ENCODE measurements at regions of chr11 and their contacts with region 1.

Region 1: DNA sequence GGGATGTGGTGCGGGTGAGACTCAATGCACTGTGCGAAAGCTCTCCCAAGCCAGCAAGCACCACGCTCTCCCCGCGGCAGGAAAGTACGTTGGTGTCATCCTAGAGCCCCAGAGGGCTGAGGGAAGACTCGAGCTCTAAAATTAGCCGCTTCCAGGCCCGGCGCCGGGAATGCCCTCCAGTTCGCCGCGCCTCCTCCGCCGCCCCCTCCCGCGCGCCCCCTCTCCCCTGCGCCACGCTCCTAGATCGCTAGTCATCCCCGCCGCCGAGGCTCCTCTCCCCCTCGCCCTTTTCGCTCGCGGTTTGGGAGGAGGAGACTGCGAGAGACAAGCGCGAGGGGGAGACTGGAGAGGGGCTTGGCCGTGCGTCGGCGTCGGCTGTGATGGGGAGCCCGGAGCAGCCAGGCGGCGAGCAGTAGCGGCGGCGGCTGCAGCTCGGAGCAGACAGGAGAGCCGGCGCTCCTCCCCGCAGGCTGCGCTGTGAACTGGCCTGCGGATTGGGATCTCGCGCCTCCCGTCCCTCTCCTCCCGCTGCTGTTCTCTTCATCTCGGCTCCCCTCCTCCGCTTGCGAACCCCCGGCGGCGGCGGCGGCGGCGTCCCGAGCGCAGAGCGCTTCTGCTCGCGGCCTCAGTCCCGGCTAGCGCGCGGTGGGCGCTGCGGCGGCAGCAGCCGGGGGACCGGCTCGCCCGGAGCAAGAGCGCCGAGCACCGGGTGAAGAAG is at the start of gene FAT3:
- DNase-seq: peak; percentile 82
- H3K4me3 ChIP-seq: peak within 1 kb of the TSS; percentile 54
- H3K27ac ChIP-seq: no peak within 1 kb of the TSS
- H3K4me1 ChIP-seq: peaks cover 16% of the 10 kb centered on the region
- H3K27me3 ChIP-seq: peaks cover 44% of the 10 kb centered on the region
- CTCF ChIP-seq: no peak
- total RNA-seq, gene FAT3: 7.3 and 9.1 TPM in 2 replicates

Region 2: GRCh38 chr11:91947215-91947820 is 277.2 kb before region 1 on chr11:
- CTCF ChIA-PET with region 1: no interaction called
- POLR2A ChIA-PET with region 1: no interaction called
- intact Hi-C with region 1: no loop called
- DNase-seq: peak; percentile 81
- H3K4me3 ChIP-seq: no peak overlapping the region
- H3K27ac ChIP-seq: peak overlapping the region; percentile 21
- H3K4me1 ChIP-seq: peaks cover 24% of the 10 kb centered on the region
- H3K27me3 ChIP-seq: no peaks in the 10 kb centered on the region
- CTCF ChIP-seq: no peak

Region 3: GRCh38 chr11:92340839-92341238 is 116.3 kb after region 1 on chr11:
- CTCF ChIA-PET with region 1: no interaction called
- POLR2A ChIA-PET with region 1: no interaction called
- intact Hi-C with region 1: no loop called
- DNase-seq: peak; percentile 48
- H3K4me3 ChIP-seq: no peak overlapping the region
- H3K27ac ChIP-seq: no peak overlapping the region
- H3K4me1 ChIP-seq: no peaks in the 10 kb centered on the region
- H3K27me3 ChIP-seq: no peaks in the 10 kb centered on the region
- CTCF ChIP-seq: peak; percentile 84

Region 4: DNA sequence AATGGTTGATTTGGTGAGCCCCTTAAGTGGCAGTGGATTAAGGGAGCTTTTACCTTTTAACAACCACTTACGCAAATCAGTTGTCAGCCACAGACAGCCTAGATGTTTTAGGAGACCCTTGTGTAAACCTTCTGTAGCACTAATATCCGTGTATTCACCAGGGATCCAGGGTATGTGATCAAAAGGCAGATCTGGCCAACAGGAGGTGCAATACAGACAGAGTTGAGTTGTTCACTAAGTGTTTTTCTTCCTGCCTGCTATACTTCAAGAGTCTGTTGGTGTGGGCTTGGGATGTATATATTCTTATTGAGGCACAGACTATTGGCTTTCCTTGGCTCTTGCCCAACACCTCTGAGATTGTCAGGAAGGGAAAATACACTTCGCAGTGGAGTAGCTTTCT is 175.1 kb after region 1 on chr11:
- CTCF ChIA-PET with region 1: no interaction called
- POLR2A ChIA-PET with region 1: no interaction called
- intact Hi-C with region 1: loop called (anchors 5 kb)
- DNase-seq: peak; percentile 17
- H3K4me3 ChIP-seq: no peak overlapping the region
- H3K27ac ChIP-seq: no peak overlapping the region
- H3K4me1 ChIP-seq: no peaks in the 10 kb centered on the region
- H3K27me3 ChIP-seq: no peaks in the 10 kb centered on the region
- CTCF ChIP-seq: peak; percentile 51; the same call in 1 of the 2 replicates

Region 5: DNA sequence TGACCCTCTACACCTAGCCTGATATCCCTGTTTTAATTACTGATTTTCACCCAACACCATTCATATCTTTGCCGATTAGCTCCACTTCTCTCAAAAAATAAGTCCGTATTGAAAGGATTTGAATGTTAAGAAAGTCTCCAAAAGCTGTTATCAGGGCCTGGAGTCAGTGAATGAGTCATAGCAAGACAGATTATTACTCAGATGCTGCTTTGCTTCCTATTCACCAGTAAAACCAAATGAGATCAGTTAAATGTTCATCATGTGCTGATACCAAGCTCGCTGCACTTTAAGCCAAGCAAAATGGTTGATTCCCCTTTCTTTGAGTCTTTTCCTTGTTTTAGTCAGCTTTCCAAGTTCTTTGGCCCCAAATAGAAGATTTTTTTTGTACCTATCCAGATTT is 228.5 kb after region 1 on chr11:
- CTCF ChIA-PET with region 1: no interaction called
- POLR2A ChIA-PET with region 1: no interaction called
- intact Hi-C with region 1: no loop called
- DNase-seq: peak; percentile 48
- H3K4me3 ChIP-seq: no peak overlapping the region
- H3K27ac ChIP-seq: no peak overlapping the region
- H3K4me1 ChIP-seq: no peaks in the 10 kb centered on the region
- H3K27me3 ChIP-seq: no peaks in the 10 kb centered on the region
- CTCF ChIP-seq: no peak

Region 6: DNA sequence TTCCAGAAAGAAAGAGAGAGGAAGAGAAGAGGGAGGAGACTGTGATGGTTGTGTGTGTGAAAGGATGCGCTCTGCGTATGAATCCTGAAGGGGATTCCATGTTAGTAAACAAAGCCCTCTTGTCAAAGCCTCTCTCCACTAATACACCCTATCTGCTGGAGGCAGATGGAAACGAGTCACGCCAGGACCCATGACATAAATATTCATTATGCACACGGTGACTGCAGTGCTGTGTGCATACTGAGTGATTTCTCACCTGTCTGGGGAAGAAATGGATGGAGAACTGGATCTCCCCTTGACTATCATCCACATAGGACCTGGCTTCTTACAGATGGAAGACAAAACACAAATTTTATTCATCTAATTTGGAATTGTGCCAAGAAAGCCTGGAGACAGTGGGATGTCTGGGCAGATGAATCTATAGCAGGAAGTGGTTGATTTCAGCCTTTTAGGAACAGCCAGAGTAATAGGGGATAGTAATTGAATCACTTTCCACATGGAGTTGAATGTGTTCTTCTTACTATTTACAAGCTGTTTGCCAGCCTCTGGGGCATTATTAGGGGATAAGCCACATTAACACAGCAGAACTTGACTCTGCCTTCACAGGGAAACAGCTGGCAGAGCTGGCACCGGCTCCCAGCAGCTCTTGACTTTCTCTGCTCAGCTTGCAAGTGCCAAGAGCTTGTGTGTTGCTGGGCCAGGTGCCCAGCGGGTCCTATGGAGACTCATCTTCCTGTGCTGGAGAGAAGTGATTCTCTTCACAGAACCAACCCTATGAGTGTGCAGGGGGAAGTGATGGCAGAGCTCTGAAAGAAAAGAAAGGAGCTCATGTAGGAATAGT is 753.9 kb after region 1 on chr11:
- CTCF ChIA-PET with region 1: no interaction called
- POLR2A ChIA-PET with region 1: no interaction called
- intact Hi-C with region 1: no loop called
- DNase-seq: peak; percentile 96
- H3K4me3 ChIP-seq: no peak overlapping the region
- H3K27ac ChIP-seq: no peak overlapping the region
- H3K4me1 ChIP-seq: peaks cover 27% of the 10 kb centered on the region
- H3K27me3 ChIP-seq: peaks cover 39% of the 10 kb centered on the region
- CTCF ChIP-seq: no peak